Activated CD4-positive, alpha-beta T cell treated with anti-CD3 and anti-CD28 coated beads for 36 hours (primary cell): ENCODE measurements at regions of chr6 and their contacts with region 1.

Region 1: DNA sequence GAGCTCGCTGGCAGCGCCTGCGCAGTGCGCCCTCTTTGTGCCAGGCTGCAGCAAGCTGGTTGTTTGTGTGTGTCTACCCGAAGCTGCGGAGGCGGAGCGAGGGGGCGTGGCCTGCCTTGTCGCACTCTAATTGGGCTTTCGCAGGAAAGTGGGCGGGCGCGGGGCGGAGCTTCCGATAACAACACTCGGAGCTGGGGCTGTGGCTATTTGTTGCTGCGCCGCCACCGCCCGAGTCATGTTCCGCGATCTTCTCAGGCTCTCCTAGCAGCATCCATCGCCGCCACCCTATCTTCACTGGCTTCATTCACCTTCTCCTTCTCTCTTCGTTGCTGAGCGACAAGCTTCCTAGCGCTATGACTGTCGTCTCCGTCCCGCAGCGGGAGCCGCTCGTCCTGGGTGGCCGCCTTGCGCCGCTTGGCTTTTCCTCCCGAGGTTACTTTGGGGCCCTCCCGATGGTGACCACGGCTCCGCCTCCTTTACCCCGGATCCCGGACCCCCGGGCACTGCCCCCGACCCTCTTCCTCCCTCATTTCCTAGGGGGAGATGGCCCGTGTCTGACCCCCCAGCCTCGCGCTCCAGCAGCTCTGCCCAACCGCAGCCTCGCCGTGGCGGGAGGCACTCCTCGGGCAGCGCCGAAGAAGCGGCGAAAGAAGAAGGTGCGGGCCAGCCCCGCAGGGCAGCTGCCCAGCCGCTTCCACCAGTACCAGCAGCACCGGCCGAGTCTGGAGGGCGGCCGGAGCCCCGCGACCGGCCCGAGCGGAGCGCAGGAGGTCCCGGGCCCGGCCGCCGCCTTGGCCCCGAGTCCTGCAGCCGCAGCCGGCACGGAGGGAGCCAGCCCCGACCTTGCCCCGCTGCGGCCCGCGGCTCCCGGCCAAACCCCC is at the start of gene PNRC1:
- DNase-seq: peak; percentile 100
- ATAC-seq: peak; percentile 72
- H3K4me3 Mint-ChIP-seq: peak within 1 kb of the TSS; percentile 94
- H3K27ac Mint-ChIP-seq: peak within 1 kb of the TSS; percentile 100
- H3K4me1 Mint-ChIP-seq: peaks cover 28% of the 10 kb centered on the region
- H3K27me3 Mint-ChIP-seq: no peaks in the 10 kb centered on the region
- total RNA-seq, gene PNRC1: 85.6 to 93.7 TPM

Region 2: GRCh38 chr6:88963139-88964090 is 117.4 kb before region 1 on chr6 and contains the start of gene RNGTT:
- CTCF ChIA-PET with region 1: interaction called, 7 read pairs
- POLR2A ChIA-PET with region 1: interaction called, 6 read pairs
- intact Hi-C with region 1: loop called (anchors 1 kb)
- DNase-seq: peak; percentile 99
- ATAC-seq: peak; percentile 100
- H3K4me3 Mint-ChIP-seq: peak within 1 kb of the TSS; percentile 99
- H3K27ac Mint-ChIP-seq: peak within 1 kb of the TSS; percentile 93
- H3K4me1 Mint-ChIP-seq: peaks cover 45% of the 10 kb centered on the region
- H3K27me3 Mint-ChIP-seq: no peaks in the 10 kb centered on the region
- total RNA-seq, gene RNGTT: 17.5 to 21.5 TPM

Region 3: DNA sequence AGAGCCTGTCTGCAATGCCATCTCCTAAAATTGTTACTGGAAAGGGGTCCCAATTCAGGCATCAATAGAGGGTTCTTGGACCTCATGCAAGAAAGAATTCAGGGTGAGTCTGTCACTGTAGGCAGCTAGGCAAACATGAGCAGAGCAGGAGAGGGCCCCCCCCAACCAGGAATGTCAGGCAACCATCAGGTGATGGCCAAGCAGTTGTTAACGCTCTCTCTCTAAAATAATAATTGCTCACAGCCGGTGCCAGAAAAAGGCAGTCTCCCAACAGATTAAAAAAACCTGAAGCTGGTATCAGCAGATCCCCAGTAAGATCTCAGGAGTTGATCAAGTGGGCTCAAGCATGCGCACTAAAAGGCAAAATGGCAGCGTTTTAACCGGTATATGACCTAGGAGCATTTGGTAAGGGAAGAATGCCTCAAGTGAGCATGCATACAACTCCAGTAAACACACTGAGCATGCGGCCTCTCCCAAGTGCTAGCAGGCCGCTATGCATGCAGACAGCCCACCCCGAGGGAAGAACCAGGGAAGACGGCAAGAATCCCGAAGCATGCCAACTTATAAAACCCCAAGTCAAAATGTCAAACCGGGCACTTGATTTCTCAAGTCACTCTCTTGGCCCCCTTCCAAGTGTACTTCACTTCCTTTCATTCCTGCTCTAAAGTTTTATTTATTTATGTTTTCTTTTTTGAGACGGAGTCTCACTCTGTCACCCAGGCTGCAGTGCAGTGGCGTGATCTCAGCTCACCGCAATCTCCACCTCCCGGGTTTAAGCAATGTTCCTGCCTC is 73.4 kb before region 1 on chr6:
- CTCF ChIA-PET with region 1: no interaction called
- POLR2A ChIA-PET with region 1: no interaction called
- intact Hi-C with region 1: no loop called
- DNase-seq: no peak
- ATAC-seq: no peak
- H3K4me3 Mint-ChIP-seq: no peak overlapping the region
- H3K27ac Mint-ChIP-seq: no peak overlapping the region
- H3K4me1 Mint-ChIP-seq: peaks cover 7% of the 10 kb centered on the region
- H3K27me3 Mint-ChIP-seq: no peaks in the 10 kb centered on the region

Region 4: GRCh38 chr6:89117211-89118108 is 36.7 kb after region 1 on chr6 and contains the start of gene SRSF12:
- CTCF ChIA-PET with region 1: interaction called, 4 read pairs
- POLR2A ChIA-PET with region 1: interaction called, 6 read pairs
- intact Hi-C with region 1: loop called in 1 of 2 experiments (anchors 2 kb)
- DNase-seq: peak; percentile 53
- ATAC-seq: peak; percentile 89
- H3K4me3 Mint-ChIP-seq: peak within 1 kb of the TSS; percentile 74
- H3K27ac Mint-ChIP-seq: no peak within 1 kb of the TSS
- H3K4me1 Mint-ChIP-seq: peaks cover 6% of the 10 kb centered on the region
- H3K27me3 Mint-ChIP-seq: peaks cover 10% of the 10 kb centered on the region
- total RNA-seq, gene SRSF12: 0.26 to 0.27 TPM

Region 5: GRCh38 chr6:89352278-89353117 is 271.7 kb after region 1 on chr6 and contains the start of gene UBE2J1:
- CTCF ChIA-PET with region 1: no interaction called
- POLR2A ChIA-PET with region 1: interaction called, 9 read pairs
- intact Hi-C with region 1: loop called (anchors 1 to 2 kb)
- DNase-seq: peak; percentile 85
- ATAC-seq: peak; percentile 84
- H3K4me3 Mint-ChIP-seq: peak within 1 kb of the TSS; percentile 91
- H3K27ac Mint-ChIP-seq: peak within 1 kb of the TSS; percentile 97
- H3K4me1 Mint-ChIP-seq: peaks cover 74% of the 10 kb centered on the region
- H3K27me3 Mint-ChIP-seq: no peaks in the 10 kb centered on the region
- total RNA-seq, gene UBE2J1: 18.7 to 21.7 TPM

Region 6: GRCh38 chr6:89638320-89639195 is 557.8 kb after region 1 on chr6 and contains the start of gene LYRM2:
- CTCF ChIA-PET with region 1: no interaction called
- POLR2A ChIA-PET with region 1: interaction called, 12 read pairs
- intact Hi-C with region 1: loop called (anchors 1 to 5 kb)
- DNase-seq: peak; percentile 96
- ATAC-seq: peak; percentile 97
- H3K4me3 Mint-ChIP-seq: peak within 1 kb of the TSS; percentile 86
- H3K27ac Mint-ChIP-seq: peak within 1 kb of the TSS; percentile 98
- H3K4me1 Mint-ChIP-seq: peaks cover 22% of the 10 kb centered on the region
- H3K27me3 Mint-ChIP-seq: no peaks in the 10 kb centered on the region
- total RNA-seq, gene LYRM2: 24.5 to 27.9 TPM